IMR-90 (cell line): ENCODE measurements at regions of chr14 and their contacts with region 1.

Region 1: GRCh38 chr14:75307700-75308379 is 29.2 kb downstream of the FOS start:
- DNase-seq: peak; percentile 76
- ATAC-seq: peak; percentile 60
- H3K4me3 ChIP-seq: no peak overlapping the region
- H3K27ac ChIP-seq: no peak overlapping the region
- H3K4me1 ChIP-seq: peaks cover 8% of the 10 kb centered on the region
- H3K27me3 ChIP-seq: no peaks in the 10 kb centered on the region
- CTCF ChIP-seq: peak; percentile 95
- POLR2A ChIP-seq: no peak
- RAD21 ChIP-seq: peak; percentile 90

Region 2: DNA sequence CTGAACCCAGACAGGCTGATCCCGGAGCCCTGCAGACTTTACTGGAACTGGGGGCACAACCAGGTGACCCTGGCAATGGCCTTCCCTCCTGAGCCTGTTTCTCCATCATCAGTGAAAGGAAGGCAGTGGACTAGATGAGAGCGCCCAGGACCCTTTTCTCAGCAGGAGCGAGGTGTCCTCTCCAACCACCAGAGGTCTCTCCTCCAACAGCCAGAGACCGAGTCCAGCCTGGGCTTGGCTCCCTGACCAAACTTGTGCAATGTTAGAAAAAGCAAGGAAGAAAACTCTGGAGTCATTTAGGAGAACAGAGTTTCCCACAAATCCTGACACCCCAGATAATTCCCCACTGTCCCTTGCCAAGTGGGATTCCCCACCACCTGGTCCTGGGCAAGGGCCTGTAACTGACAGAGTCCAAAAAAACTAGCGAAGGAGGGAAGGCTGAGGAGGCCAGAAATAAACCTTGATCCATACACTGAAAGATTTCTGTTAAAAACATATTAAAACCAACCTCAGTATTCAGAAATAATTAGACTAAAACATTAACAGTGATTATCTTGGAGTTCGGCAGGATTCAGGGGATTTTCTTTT is 393.8 kb before region 1 on chr14:
- CTCF ChIA-PET with region 1: no interaction called
- POLR2A ChIA-PET with region 1: no interaction called
- dilution Hi-C with region 1: no loop called
- in situ Hi-C with region 1: loop called (anchors 10 kb)
- intact Hi-C with region 1: loop called (anchors 1 kb)
- DNase-seq: peak; percentile 77
- ATAC-seq: peak; percentile 93
- H3K4me3 ChIP-seq: no peak overlapping the region
- H3K27ac ChIP-seq: no peak overlapping the region
- H3K4me1 ChIP-seq: peaks cover 1% of the 10 kb centered on the region; the same call in 1 of the 2 replicates
- H3K27me3 ChIP-seq: no peaks in the 10 kb centered on the region
- CTCF ChIP-seq: peak; percentile 90
- POLR2A ChIP-seq: no peak
- RAD21 ChIP-seq: peak; percentile 89

Region 3: DNA sequence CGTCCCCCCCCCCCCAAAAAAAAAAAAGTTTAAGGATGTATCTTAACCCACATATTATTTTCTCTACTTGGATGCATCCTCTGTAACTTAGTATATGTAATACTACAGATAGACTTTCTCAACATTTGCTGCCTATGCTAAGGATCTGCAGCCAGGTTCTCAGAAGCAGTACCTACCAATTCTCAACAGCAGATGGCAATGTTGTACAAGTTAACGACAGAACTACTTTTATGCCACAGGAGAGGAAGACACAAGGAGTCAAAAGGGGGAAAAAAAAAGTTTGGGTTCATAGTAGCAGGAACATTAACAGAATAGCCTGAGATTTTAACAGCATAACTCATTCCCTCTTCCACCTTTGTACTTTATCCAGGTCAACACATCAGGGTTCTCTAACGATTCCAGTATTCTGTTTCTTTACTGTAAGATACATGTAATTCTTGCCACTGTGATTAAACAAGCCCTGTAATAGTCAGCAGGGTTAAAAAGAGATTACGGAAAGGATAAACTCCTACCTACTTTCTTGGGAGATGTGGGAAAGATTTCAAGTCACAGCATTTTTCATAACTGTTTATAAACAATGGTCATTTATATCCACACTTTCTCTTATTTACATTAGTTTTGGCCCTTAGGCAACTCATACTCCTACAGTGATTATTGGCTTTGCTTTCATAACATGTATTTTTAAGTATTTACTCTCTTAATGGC is 175.3 kb before region 1 on chr14:
- CTCF ChIA-PET with region 1: interaction called, 3 read pairs
- POLR2A ChIA-PET with region 1: no interaction called
- dilution Hi-C with region 1: loop called (anchors 25 kb)
- in situ Hi-C with region 1: loop called (anchors 5 kb)
- intact Hi-C with region 1: loop called (anchors 1 kb)
- DNase-seq: peak; percentile 74
- ATAC-seq: peak; percentile 95
- H3K4me3 ChIP-seq: no peak overlapping the region
- H3K27ac ChIP-seq: no peak overlapping the region
- H3K4me1 ChIP-seq: no peaks in the 10 kb centered on the region
- H3K27me3 ChIP-seq: no peaks in the 10 kb centered on the region
- CTCF ChIP-seq: peak; percentile 81
- POLR2A ChIP-seq: 0 out of 2 replicates have a peak, but pooled peaks have one; percentile 39
- RAD21 ChIP-seq: peak; percentile 89

Region 4: DNA sequence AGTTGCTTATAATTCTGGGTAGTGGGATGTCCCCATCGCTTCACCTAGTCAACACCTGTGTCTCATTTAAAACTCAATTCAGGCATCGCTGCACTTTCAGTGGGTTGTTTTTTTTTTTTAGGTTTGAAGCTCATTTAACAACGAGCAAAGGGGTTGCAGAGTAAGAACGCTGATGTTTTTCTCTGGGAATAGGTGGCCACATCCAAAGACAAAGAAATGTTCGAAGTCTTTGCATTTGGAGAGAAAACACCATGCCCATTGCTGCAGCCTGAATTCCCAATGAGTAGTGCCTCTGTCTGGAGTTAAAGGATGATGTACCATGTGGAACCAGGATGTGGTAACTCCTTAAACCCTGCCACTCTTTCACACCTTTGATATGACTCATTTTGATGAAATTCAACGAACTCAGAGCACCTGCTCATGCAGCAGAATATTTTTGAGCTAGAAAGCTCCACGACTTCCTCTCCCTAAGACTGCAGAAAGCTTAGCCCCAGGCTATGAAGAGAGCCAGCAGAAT is 179.4 kb after region 1 on chr14:
- CTCF ChIA-PET with region 1: interaction called, 24 read pairs
- POLR2A ChIA-PET with region 1: interaction called, 3 read pairs
- dilution Hi-C with region 1: no loop called
- in situ Hi-C with region 1: loop called (anchors 5 kb)
- intact Hi-C with region 1: loop called (anchors 1 kb)
- DNase-seq: no peak
- ATAC-seq: no peak
- H3K4me3 ChIP-seq: no peak overlapping the region
- H3K27ac ChIP-seq: no peak overlapping the region
- H3K4me1 ChIP-seq: no peaks in the 10 kb centered on the region
- H3K27me3 ChIP-seq: peaks cover 30% of the 10 kb centered on the region
- CTCF ChIP-seq: no peak
- POLR2A ChIP-seq: no peak
- RAD21 ChIP-seq: no peak

Region 5: DNA sequence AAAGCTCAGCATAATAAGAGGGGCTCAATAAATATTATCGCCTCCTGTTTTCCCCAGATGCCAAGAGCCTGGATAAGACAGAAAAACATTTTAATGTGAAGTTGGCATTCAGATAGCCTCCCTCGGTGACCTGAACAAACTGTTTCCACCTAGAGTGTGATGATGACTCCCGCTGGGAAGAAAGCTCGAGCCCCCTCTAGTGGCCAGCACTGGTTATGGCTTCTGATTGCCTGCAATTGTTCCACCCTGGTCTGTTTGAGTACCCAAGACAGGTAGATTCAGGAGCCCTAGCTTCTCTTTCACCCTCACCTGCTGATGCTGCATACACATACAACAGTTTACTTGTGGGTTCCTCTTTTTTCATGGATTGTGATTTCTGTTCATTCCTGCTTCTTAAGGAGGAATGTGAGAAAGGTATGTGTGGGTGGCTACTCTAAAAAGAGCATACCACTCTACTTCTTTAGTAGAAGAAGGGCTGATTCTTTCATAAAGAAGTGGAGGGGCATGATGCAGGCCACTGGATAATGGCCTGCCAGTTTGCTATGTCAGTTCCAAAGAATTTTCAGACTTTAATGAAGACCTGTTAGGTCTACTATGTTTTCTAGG is 346.4 kb after region 1 on chr14:
- CTCF ChIA-PET with region 1: no interaction called
- POLR2A ChIA-PET with region 1: no interaction called
- dilution Hi-C with region 1: no loop called
- in situ Hi-C with region 1: no loop called
- intact Hi-C with region 1: loop called (anchors 1 kb)
- DNase-seq: peak; percentile 53
- ATAC-seq: peak; percentile 99
- H3K4me3 ChIP-seq: no peak overlapping the region
- H3K27ac ChIP-seq: no peak overlapping the region
- H3K4me1 ChIP-seq: no peaks in the 10 kb centered on the region
- H3K27me3 ChIP-seq: no peaks in the 10 kb centered on the region
- CTCF ChIP-seq: peak; percentile 95
- POLR2A ChIP-seq: no peak
- RAD21 ChIP-seq: peak; percentile 90